ENCODE measurements at regions of chr13 and their contacts with region 1.

Region 1: GRCh38 chr13:114065141-114065925 is 67.1 kb downstream of the RASA3 start:
- DNase-seq: peak; percentile 83 to 93 (median 88)
- ATAC-seq: peak; percentile 84 to 94 (median 90)
- H3K4me3 ChIP-seq: peak overlapping the region in 9 of 12 donors; percentile 36 to 56 (median 42)
- H3K27ac ChIP-seq: peak overlapping the region; percentile 49 to 99 (median 88)
- H3K4me1 ChIP-seq: peaks cover 0 to 72% (median 52%) of the 10 kb centered on the region in 12 donors
- H3K27me3 ChIP-seq: no peaks in the 10 kb centered on the region
- CTCF ChIP-seq: no peak
- POLR2A ChIP-seq: no peak

Region 2: DNA sequence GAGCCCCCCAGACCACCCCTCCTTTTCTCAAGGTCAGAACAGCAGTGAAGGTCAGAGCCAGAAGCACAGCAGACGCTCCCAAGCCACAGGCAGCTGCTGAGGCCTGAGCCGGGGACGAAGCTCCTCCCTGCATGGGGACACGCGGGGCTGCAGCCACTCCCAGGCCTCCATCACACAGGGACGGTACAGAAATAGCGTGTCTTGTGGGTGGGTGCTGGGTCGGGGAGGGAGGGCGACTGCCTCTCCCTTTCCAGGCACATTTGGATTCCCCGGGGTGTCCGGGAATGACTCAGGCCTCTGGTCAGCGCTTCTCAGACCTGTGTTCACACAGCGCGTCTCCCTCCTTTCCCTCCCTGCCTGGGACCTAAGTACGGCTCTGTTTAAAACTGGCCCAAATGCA is 33.9 kb after region 1 on chr13:
- intact Hi-C with region 1: loop called in 1 of 10 experiments (anchors 2 kb)
- DNase-seq: peak; percentile 81 to 92 (median 88)
- ATAC-seq: peak; percentile 81 to 93 (median 92)
- H3K4me3 ChIP-seq: peak overlapping the region in 2 of 12 donors; percentile 15 to 22
- H3K27ac ChIP-seq: peak overlapping the region in 9 of 12 donors; percentile 27 to 72 (median 49)
- H3K4me1 ChIP-seq: peaks cover 0 to 38% (median 21%) of the 10 kb centered on the region in 12 donors
- H3K27me3 ChIP-seq: no peaks in the 10 kb centered on the region
- CTCF ChIP-seq: no peak
- POLR2A ChIP-seq: no peak

Region 3: GRCh38 chr13:114124921-114125320 is 59.6 kb after region 1 on chr13:
- intact Hi-C with region 1: loop called in 5 of 10 experiments (anchors 2 to 10 kb)
- DNase-seq: peak in 1 of 5 donors; percentile 3
- ATAC-seq: no peak
- H3K4me3 ChIP-seq: no peak overlapping the region
- H3K27ac ChIP-seq: no peak overlapping the region
- H3K4me1 ChIP-seq: peaks cover 0 to 91% (median 50%) of the 10 kb centered on the region in 12 donors
- H3K27me3 ChIP-seq: no peaks in the 10 kb centered on the region
- CTCF ChIP-seq: no peak
- POLR2A ChIP-seq: no peak

Region 4: DNA sequence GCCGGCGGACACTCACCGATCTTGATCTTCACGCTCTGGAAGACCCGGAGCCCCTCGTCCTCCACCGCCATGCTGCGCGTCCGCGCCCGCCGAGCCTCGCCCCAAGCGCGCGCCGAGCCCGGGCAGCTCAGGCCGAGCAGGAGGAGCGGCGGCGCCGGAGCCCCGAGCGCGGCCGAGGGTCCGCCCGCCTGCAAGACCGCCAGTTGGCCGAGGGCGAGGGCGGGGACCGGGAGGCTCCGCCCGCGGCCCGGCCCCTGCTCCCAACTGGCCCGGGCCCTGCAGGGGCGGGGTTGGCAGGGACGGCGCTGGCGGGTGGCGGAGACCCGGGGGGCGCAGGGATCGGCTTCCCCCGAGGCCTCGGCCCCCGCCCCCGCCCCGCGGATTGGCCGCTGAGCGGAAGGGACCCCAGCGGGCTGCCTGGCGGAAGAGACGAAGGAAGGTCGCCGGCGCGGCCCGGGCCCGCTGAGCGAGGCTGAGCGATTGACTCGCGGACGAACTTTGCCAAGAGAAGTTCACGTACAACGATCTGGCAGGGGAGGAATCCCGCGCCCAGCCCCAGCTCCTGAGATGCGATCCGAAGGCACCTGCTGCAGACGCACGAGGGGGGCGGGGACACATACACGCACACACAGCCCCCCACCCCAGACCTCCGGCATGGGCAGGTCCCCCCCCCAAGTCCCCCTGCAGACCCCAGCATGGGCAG is 67.2 kb after region 1 on chr13 and contains the start of gene RASA3:
- intact Hi-C with region 1: loop called in 4 of 10 experiments (anchors 2 to 10 kb)
- DNase-seq: peak; percentile 84 to 91 (median 85)
- ATAC-seq: peak; percentile 60 to 92 (median 85)
- H3K4me3 ChIP-seq: peak within 1 kb of the TSS; percentile 71 to 99 (median 88)
- H3K27ac ChIP-seq: peak within 1 kb of the TSS; percentile 39 to 94 (median 77)
- H3K4me1 ChIP-seq: peaks cover 0 to 53% (median 39%) of the 10 kb centered on the region in 12 donors
- H3K27me3 ChIP-seq: no peaks in the 10 kb centered on the region
- CTCF ChIP-seq: no peak
- POLR2A ChIP-seq: peak in 1 of 2 donors; percentile 67
- total RNA-seq, gene RASA3: 7.2 to 24.2 (median 10.5) TPM

Measured in heart left ventricle (tissue), 16 donors.